ENCODE measurements at regions of chr6 and their contacts with region 1.

Region 1: GRCh38 chr6:41039060-41039998 is at the start of gene UNC5CL:
- DNase-seq: peak; percentile 81
- H3K4me3 Mint-ChIP-seq: no peak within 1 kb of the TSS
- H3K27ac Mint-ChIP-seq: peak within 1 kb of the TSS; percentile 9
- H3K4me1 Mint-ChIP-seq: peaks cover 12% of the 10 kb centered on the region
- H3K27me3 Mint-ChIP-seq: peaks cover 3% of the 10 kb centered on the region
- total RNA-seq, gene UNC5CL: 1.1 to 1.6 TPM

Region 2: GRCh38 chr6:41049521-41049920 is 10.2 kb after region 1 on chr6:
- CTCF ChIA-PET with region 1: interaction called, 22 read pairs
- POLR2A ChIA-PET with region 1: no interaction called
- DNase-seq: no peak
- H3K4me3 Mint-ChIP-seq: no peak overlapping the region
- H3K27ac Mint-ChIP-seq: no peak overlapping the region
- H3K4me1 Mint-ChIP-seq: peaks cover 20% of the 10 kb centered on the region
- H3K27me3 Mint-ChIP-seq: no peaks in the 10 kb centered on the region

Measured in activated CD4-positive, alpha-beta T cell treated with anti-CD3 and anti-CD28 coated beads, Interleukin-2, amount 10 ng/mL, durations not matched to agents 7 days and 5 days (primary cell).